Panc1 (cell line): ENCODE measurements at regions of chr9 and their contacts with region 1.

Region 1: DNA sequence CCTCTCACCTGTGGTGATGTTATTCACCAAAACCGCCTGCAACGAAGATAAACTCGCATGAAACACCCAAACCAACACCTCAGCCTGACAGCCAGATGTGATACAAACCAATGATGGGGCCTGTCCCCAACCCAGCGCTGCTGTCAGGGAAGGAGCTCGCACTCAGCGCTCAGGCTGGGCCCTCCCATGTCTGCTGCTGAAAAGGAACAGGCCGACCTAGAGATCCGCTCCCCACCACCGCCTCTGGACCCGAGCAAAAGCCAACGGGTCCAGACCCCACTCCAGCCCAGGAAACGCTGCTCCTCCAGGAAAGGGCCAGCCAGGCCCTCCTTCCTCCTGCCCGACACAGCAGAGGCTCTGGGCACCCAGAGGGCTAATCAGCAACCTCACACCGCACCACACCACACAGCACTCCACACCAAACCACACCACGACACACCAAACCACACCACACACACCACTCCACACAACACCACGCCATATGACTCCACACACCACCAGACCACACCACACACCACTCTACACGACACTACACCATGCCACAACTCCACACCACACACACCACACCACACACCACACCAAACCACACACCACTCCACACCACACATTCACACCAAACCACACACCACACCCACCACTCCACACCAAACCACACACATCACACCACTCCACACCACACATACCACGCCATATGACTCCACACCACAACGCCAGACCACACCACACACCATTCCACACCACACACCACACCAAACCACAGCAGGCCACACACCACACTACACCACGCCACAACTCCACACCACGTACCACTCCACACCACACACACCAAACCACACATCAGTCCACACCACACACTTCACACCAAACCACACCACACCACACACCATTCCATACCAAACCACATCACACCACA is 46.5 kb downstream of the GOLM1 start:
- DNase-seq: no peak
- ATAC-seq: no peak
- H3K4me3 ChIP-seq: no peak overlapping the region
- H3K27ac ChIP-seq: no peak overlapping the region
- H3K4me1 ChIP-seq: no peaks in the 10 kb centered on the region
- H3K27me3 ChIP-seq: no peaks in the 10 kb centered on the region
- CTCF ChIP-seq: no peak

Region 2: DNA sequence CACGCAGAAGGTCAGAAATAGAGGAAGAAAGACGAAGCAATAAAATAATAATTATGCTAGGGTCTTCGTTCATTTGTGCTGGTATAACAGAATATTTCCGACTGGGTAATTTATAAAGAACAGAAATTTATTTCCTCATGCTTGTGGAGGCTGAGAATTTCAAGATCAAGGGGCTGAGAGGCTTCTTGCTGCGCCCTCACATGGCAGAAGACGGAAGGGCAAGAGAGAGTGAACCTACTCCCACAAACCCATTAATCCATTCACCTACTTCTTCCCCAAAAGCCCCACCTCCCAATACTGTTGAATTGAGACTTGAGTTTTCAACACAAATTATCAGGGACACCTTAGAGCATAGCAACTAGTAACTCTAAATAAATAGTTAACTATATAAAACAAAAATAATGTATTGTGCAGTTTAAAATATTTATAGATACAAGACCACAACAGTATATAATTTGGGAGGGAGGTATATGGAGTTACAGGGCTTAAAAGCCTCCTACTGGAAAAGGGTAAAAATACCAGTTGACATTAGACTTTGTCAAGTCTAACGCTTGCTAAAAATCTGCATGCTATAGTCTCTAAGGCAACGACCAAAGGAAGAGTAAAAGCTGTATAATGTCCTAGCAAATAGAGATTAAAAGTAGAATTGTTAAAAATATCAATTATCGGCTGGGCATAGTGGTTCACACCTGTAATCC is 152.2 kb before region 1 on chr9:
- CTCF ChIA-PET with region 1: no interaction called
- POLR2A ChIA-PET with region 1: no interaction called
- in situ Hi-C with region 1: no loop called
- intact Hi-C with region 1: no loop called
- DNase-seq: peak; percentile 12
- ATAC-seq: no peak
- H3K4me3 ChIP-seq: no peak overlapping the region
- H3K27ac ChIP-seq: no peak overlapping the region
- H3K4me1 ChIP-seq: no peaks in the 10 kb centered on the region
- H3K27me3 ChIP-seq: no peaks in the 10 kb centered on the region
- CTCF ChIP-seq: peak; percentile 74

Region 3: DNA sequence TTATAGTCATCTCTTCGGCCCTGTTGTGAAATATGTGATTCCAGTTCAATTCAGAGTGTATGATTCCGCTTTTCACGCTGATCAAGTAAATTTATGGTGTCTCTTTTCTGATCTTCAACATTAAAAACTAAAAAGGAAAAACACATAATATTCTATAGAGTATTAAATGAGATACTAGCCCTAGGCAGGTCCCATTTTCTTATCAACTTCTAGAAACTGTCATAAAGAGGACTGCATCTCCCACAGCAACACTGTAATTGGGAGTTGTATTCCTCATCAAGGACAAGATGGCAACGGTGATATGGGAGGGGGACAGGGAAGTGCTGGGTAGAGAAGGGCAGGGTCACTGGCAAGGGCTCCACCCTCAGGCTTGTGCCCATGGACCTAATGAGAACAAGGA is 25.0 kb before region 1 on chr9:
- CTCF ChIA-PET with region 1: no interaction called
- POLR2A ChIA-PET with region 1: interaction called, 10 read pairs
- in situ Hi-C with region 1: no loop called
- intact Hi-C with region 1: no loop called
- DNase-seq: no peak
- ATAC-seq: no peak
- H3K4me3 ChIP-seq: no peak overlapping the region
- H3K27ac ChIP-seq: no peak overlapping the region
- H3K4me1 ChIP-seq: no peaks in the 10 kb centered on the region
- H3K27me3 ChIP-seq: no peaks in the 10 kb centered on the region
- CTCF ChIP-seq: no peak

Region 4: GRCh38 chr9:86098824-86099700 is 46.2 kb after region 1 on chr9 and contains the start of gene GOLM1:
- CTCF ChIA-PET with region 1: no interaction called
- POLR2A ChIA-PET with region 1: no interaction called
- in situ Hi-C with region 1: no loop called
- intact Hi-C with region 1: no loop called
- DNase-seq: no peak
- ATAC-seq: peak; percentile 93
- H3K4me3 ChIP-seq: peak within 1 kb of the TSS; percentile 72 to 76
- H3K27ac ChIP-seq: peak within 1 kb of the TSS; percentile 73
- H3K4me1 ChIP-seq: peaks cover 24% of the 10 kb centered on the region
- H3K27me3 ChIP-seq: no peaks in the 10 kb centered on the region
- CTCF ChIP-seq: no peak; the same call in 1 of the 2 replicates
- total RNA-seq, gene GOLM1: 73.4 TPM